HCT116 (cell line): ENCODE measurements at regions of chr7 and their contacts with region 1.

Region 1: GRCh38 chr7:95545078-95545498 is 51.2 kb downstream of the PDK4 start:
- DNase-seq: peak; percentile 47
- ATAC-seq: peak; percentile 93
- H3K4me3 ChIP-seq: peak overlapping the region; percentile 3 to 44
- H3K27ac ChIP-seq: no peak overlapping the region
- H3K4me1 ChIP-seq: peaks cover 5 to 15% of the 10 kb centered on the region in 2 experiments; a peak in 3 of 4 replicates
- H3K27me3 ChIP-seq: no peaks in the 10 kb centered on the region
- CTCF ChIP-seq: peak; percentile 61 to 80 (median 76); a peak in 5 of 6 replicates
- POLR2A ChIP-seq: no peak
- RAD21 ChIP-seq: peak; percentile 76

Region 2: GRCh38 chr7:95527033-95527775 is 17.9 kb before region 1 on chr7:
- CTCF ChIA-PET with region 1: interaction called, 11 read pairs
- POLR2A ChIA-PET with region 1: interaction called, 4 read pairs
- RAD21 ChIA-PET with region 1: no interaction called
- intact Hi-C with region 1: no loop called
- DNase-seq: peak; percentile 50
- ATAC-seq: peak; percentile 95
- H3K4me3 ChIP-seq: no peak overlapping the region
- H3K27ac ChIP-seq: no peak overlapping the region
- H3K4me1 ChIP-seq: no peaks in the 10 kb centered on the region; a peak in 1 of 4 replicates
- H3K27me3 ChIP-seq: no peaks in the 10 kb centered on the region
- CTCF ChIP-seq: peak; percentile 90 to 95 (median 94)
- POLR2A ChIP-seq: no peak
- RAD21 ChIP-seq: peak; percentile 97

Region 3: GRCh38 chr7:95684037-95684436 is 138.9 kb after region 1 on chr7:
- CTCF ChIA-PET with region 1: interaction called, 55 read pairs
- POLR2A ChIA-PET with region 1: interaction called, 3 read pairs
- RAD21 ChIA-PET with region 1: interaction called, 5 to 7 read pairs
- intact Hi-C with region 1: loop called (anchors 1 kb)
- DNase-seq: peak; percentile 44
- ATAC-seq: peak; percentile 74
- H3K4me3 ChIP-seq: no peak overlapping the region
- H3K27ac ChIP-seq: no peak overlapping the region
- H3K4me1 ChIP-seq: peaks cover 0 to 5% of the 10 kb centered on the region in 2 experiments; a peak in 1 of 4 replicates
- H3K27me3 ChIP-seq: no peaks in the 10 kb centered on the region
- CTCF ChIP-seq: peak; percentile 50 to 82 (median 57); a peak in 5 of 6 replicates
- POLR2A ChIP-seq: no peak
- RAD21 ChIP-seq: peak; percentile 86

Region 4: GRCh38 chr7:95700917-95701316 is 155.8 kb after region 1 on chr7:
- CTCF ChIA-PET with region 1: no interaction called
- POLR2A ChIA-PET with region 1: no interaction called
- RAD21 ChIA-PET with region 1: no interaction called
- intact Hi-C with region 1: no loop called
- DNase-seq: no peak
- ATAC-seq: no peak
- H3K4me3 ChIP-seq: no peak overlapping the region
- H3K27ac ChIP-seq: no peak overlapping the region
- H3K4me1 ChIP-seq: no peaks in the 10 kb centered on the region
- H3K27me3 ChIP-seq: no peaks in the 10 kb centered on the region
- CTCF ChIP-seq: no peak
- POLR2A ChIP-seq: no peak
- RAD21 ChIP-seq: no peak